ENCODE measurements at regions of chr2 and their contacts with region 1.

Region 1: GRCh38 chr2:220687231-220687843 is 884.8 kb downstream of the EPHA4 start:
- DNase-seq: peak; percentile 82
- H3K4me3 ChIP-seq: no peak overlapping the region
- H3K27ac ChIP-seq: no peak overlapping the region
- H3K4me1 ChIP-seq: peaks cover 22% of the 10 kb centered on the region
- H3K27me3 ChIP-seq: no peaks in the 10 kb centered on the region
- CTCF ChIP-seq: peak; percentile 88

Region 2: DNA sequence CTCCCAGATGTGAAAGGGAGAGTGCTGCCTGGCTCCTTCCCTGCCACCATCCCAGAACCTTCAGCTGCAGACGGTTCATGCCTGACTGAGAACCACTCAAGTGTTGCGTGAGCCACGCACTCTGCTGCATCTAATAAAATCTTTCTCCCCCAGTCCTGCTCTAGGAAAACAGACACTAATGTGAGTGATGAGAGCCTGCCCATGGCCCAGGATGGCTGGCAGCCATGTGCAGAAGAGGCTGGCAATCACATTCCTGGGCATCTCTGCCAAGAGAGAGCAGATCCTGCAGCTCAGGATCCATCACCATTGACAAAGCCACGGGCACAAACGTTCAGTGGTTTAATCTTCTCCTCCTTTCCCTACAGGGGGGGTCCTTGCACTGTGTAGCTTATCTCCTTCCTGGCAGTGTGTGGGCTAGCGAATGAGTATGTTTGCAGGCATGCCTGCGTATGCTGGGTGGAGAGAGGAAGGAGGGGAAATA is 582.4 kb before region 1 on chr2:
- CTCF ChIA-PET with region 1: no interaction called
- POLR2A ChIA-PET with region 1: no interaction called
- intact Hi-C with region 1: loop called (anchors 10 kb)
- DNase-seq: peak; percentile 91
- H3K4me3 ChIP-seq: no peak overlapping the region
- H3K27ac ChIP-seq: no peak overlapping the region
- H3K4me1 ChIP-seq: peaks cover 19% of the 10 kb centered on the region
- H3K27me3 ChIP-seq: no peaks in the 10 kb centered on the region
- CTCF ChIP-seq: peak; percentile 61

Region 3: DNA sequence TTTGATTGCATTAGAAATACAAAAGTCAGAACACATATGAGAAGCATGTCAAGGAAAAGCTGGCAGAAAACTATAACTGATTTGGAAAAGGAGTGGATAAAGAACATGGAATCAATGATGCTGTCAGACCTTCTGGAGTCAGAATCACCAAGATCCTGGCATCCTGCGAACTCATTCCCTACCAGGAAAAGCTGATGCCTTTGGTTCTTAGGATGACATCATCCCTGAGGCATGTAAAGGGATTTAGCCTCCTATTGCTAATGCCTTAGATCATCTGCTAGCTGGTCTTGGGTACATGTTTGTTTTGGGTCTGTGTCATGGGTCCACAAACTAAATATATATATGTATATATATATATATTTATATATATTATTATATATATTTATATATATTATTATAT is 204.1 kb after region 1 on chr2:
- CTCF ChIA-PET with region 1: no interaction called
- POLR2A ChIA-PET with region 1: no interaction called
- intact Hi-C with region 1: no loop called
- DNase-seq: peak; percentile 71
- H3K4me3 ChIP-seq: no peak overlapping the region
- H3K27ac ChIP-seq: no peak overlapping the region
- H3K4me1 ChIP-seq: peaks cover 14% of the 10 kb centered on the region
- H3K27me3 ChIP-seq: peaks cover 3% of the 10 kb centered on the region
- CTCF ChIP-seq: no peak

Region 4: GRCh38 chr2:221104361-221104811 is 417.0 kb after region 1 on chr2:
- CTCF ChIA-PET with region 1: no interaction called
- POLR2A ChIA-PET with region 1: no interaction called
- intact Hi-C with region 1: loop called (anchors 1 kb)
- DNase-seq: peak; percentile 38
- H3K4me3 ChIP-seq: no peak overlapping the region
- H3K27ac ChIP-seq: no peak overlapping the region
- H3K4me1 ChIP-seq: peaks cover 14% of the 10 kb centered on the region
- H3K27me3 ChIP-seq: no peaks in the 10 kb centered on the region
- CTCF ChIP-seq: no peak

Region 5: GRCh38 chr2:221590861-221591365 is 903.6 kb after region 1 on chr2:
- CTCF ChIA-PET with region 1: no interaction called
- POLR2A ChIA-PET with region 1: no interaction called
- intact Hi-C with region 1: no loop called
- DNase-seq: no peak
- H3K4me3 ChIP-seq: no peak overlapping the region
- H3K27ac ChIP-seq: no peak overlapping the region
- H3K4me1 ChIP-seq: no peaks in the 10 kb centered on the region
- H3K27me3 ChIP-seq: no peaks in the 10 kb centered on the region
- CTCF ChIP-seq: no peak

Region 6: DNA sequence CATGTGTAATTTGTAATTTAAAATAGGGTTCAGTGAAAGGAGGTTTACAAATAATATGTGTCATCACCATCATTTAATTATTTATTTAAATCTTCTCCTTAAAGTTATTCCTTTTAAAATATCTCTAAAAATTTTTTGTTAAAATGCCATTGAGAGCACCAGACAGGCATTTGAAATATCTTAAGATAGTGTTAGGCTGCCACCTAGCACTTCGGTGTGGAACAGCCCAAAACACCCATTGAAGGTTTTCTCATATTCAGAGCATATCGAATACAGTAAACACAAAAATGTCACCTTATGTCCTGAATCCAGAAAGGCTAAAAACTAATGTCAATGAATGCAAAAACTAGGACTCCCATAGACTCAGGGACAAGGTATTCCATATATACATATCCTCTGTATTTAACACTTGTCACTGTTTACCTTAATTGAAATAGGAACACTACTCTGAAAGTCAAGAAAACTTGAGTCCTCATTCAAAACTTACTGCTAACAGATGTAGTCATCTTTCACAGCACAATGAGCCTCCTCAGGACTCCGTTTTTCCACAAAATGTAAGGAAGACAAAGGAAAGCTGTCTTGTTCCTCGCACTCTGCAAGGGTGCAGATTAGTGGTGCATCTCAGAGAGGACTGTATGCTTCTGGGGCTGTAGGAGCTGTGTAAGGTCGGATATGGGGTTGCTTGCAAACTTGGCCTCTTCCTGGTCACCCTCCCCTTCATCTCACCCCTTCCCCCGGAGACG is 1281.9 kb after region 1 on chr2:
- CTCF ChIA-PET with region 1: no interaction called
- POLR2A ChIA-PET with region 1: no interaction called
- intact Hi-C with region 1: loop called (anchors 10 kb)
- DNase-seq: peak; percentile 65
- H3K4me3 ChIP-seq: no peak overlapping the region
- H3K27ac ChIP-seq: no peak overlapping the region
- H3K4me1 ChIP-seq: no peaks in the 10 kb centered on the region
- H3K27me3 ChIP-seq: no peaks in the 10 kb centered on the region
- CTCF ChIP-seq: peak; percentile 84

Measured in A673 (cell line).